Heart left ventricle (tissue), 16 donors: ENCODE measurements at regions of chr10 and their contacts with region 1.

Region 1: DNA sequence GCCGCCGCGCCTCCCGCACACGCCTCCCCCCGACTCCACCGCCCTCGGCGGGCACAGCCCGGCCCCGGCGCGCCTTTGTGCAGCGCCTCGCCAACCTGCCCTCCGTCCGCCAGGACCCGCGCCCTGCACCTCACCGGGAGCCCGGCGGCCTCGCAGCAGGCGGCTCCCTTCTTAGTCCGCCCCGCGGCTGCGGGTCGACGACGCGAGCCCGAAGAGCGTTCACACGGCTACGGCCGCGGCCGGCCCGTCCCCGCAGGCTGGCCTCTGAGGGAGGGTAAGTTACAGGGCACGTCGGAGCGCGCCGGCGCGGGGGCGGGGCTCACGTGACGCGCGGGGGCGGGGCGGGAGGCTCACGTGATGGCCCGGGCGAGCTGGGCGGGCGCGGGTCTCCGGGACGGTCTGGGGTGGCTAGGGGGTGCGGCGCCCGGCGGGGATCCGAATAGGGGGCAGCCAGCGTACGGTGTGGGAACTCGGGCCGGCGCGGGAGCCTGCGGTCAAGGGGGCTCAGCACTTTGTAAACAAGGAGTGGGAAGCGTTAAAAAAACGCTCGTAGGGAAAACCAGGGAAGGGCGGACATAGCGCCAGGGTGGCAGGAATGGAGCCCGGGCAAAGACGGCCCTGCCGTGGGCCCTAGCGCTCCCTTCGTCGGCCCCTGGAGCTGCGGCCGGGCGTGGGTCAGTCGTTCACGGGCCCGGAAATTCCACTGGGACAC is at the start of gene ARHGAP12:
- DNase-seq: peak; percentile 92 to 96 (median 93)
- ATAC-seq: peak; percentile 88 to 97 (median 96)
- H3K4me3 ChIP-seq: peak within 1 kb of the TSS; percentile 66 to 97 (median 90)
- H3K27ac ChIP-seq: peak within 1 kb of the TSS; percentile 72 to 99 (median 96)
- H3K4me1 ChIP-seq: peaks cover 0 to 49% (median 28%) of the 10 kb centered on the region in 12 donors
- H3K27me3 ChIP-seq: no peaks in the 10 kb centered on the region
- CTCF ChIP-seq: peak in 2 of 12 donors; percentile 2 to 19
- POLR2A ChIP-seq: peak; percentile 78 to 95
- total RNA-seq, gene ARHGAP12: 17.6 to 27.6 (median 21.2) TPM

Region 2: GRCh38 chr10:31875608-31876007 is 53.1 kb before region 1 on chr10:
- intact Hi-C with region 1: loop called in 1 of 10 experiments (anchors 10 kb)
- DNase-seq: no peak
- ATAC-seq: no peak
- H3K4me3 ChIP-seq: no peak overlapping the region
- H3K27ac ChIP-seq: no peak overlapping the region
- H3K4me1 ChIP-seq: peaks cover 0 to 24% (median 11%) of the 10 kb centered on the region in 12 donors
- H3K27me3 ChIP-seq: no peaks in the 10 kb centered on the region
- CTCF ChIP-seq: no peak
- POLR2A ChIP-seq: no peak

Region 3: GRCh38 chr10:31886885-31887284 is 41.8 kb before region 1 on chr10:
- intact Hi-C with region 1: loop called in 1 of 10 experiments (anchors 5 kb)
- DNase-seq: no peak
- ATAC-seq: peak; percentile 73 to 83 (median 75)
- H3K4me3 ChIP-seq: no peak overlapping the region
- H3K27ac ChIP-seq: peak overlapping the region in 8 of 12 donors; percentile 7 to 69 (median 36)
- H3K4me1 ChIP-seq: peaks cover 0 to 39% (median 15%) of the 10 kb centered on the region in 12 donors
- H3K27me3 ChIP-seq: no peaks in the 10 kb centered on the region
- CTCF ChIP-seq: no peak
- POLR2A ChIP-seq: no peak

Region 4: DNA sequence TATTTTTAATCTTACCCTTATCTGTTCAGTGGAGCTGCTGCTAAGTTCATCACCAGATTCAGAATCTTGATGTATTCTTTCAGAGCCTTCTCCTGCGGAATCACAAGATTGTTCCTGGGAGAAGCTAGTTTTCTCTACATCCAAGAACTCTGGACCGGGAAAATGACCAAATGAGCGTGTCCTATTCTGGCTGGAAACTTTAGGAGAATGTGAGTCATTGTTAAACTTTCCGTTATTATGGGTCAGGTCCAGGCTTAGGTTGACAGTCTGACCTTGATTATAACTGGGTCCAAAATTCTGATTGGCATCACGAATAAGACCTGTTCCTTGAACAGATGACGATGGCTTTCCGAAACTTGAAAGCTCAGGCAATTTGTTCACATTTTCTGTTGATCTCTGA is 20.5 kb before region 1 on chr10:
- intact Hi-C with region 1: no loop called
- DNase-seq: no peak
- ATAC-seq: peak in 2 of 4 donors; percentile 28 to 54
- H3K4me3 ChIP-seq: no peak overlapping the region
- H3K27ac ChIP-seq: no peak overlapping the region
- H3K4me1 ChIP-seq: peaks cover 0 to 49% (median 21%) of the 10 kb centered on the region in 12 donors
- H3K27me3 ChIP-seq: no peaks in the 10 kb centered on the region
- CTCF ChIP-seq: no peak
- POLR2A ChIP-seq: no peak

Region 5: GRCh38 chr10:32005050-32005449 is 76.3 kb after region 1 on chr10:
- intact Hi-C with region 1: loop called in 1 of 10 experiments (anchors 5 kb)
- DNase-seq: no peak
- ATAC-seq: peak; percentile 16 to 57 (median 43)
- H3K4me3 ChIP-seq: no peak overlapping the region
- H3K27ac ChIP-seq: peak overlapping the region in 1 of 12 donors; percentile 38
- H3K4me1 ChIP-seq: peaks cover 0 to 31% (median 6%) of the 10 kb centered on the region in 12 donors
- H3K27me3 ChIP-seq: no peaks in the 10 kb centered on the region
- CTCF ChIP-seq: peak in 11 of 12 donors; percentile 25 to 56 (median 38)
- POLR2A ChIP-seq: no peak